ENCODE measurements at regions of chr2 and their contacts with region 1.

Region 1: GRCh38 chr2:39728941-39729351 is 50.1 kb downstream of the THUMPD2 start:
- DNase-seq: peak; percentile 60
- H3K4me3 Mint-ChIP-seq: no peak overlapping the region
- H3K27ac Mint-ChIP-seq: no peak overlapping the region
- H3K4me1 Mint-ChIP-seq: no peaks in the 10 kb centered on the region
- H3K27me3 Mint-ChIP-seq: peaks cover 13% of the 10 kb centered on the region
- CTCF ChIP-seq: peak; percentile 83

Region 2: DNA sequence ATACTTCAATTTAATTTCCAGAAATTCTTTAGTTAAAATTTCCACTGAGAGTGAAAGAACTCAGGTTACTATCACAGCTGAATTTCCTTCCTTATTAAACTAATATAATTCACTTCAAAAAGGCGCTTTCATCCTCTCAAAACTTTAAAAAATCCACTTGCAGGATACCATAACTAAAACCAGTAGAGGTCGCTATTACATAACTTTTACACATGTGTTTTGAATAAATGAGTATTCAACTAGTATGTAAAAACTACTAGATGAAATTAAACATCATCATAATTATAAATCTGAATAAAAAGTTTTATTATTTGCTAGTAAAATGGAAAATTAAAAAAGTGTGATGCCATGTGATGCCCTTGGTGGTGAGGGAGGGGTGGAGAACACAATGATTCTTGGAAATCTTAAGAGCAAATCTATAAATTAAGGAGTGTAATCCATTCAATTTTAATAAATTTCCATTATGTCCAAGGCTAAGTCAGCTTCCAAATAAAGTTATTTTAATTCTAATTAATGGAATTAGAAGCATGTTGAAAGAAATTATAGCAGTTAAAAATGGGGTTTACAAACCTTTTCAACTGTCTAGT is 669.5 kb before region 1 on chr2:
- CTCF ChIA-PET with region 1: no interaction called
- intact Hi-C with region 1: loop called (anchors 5 kb)
- DNase-seq: no peak
- H3K4me3 Mint-ChIP-seq: no peak overlapping the region
- H3K27ac Mint-ChIP-seq: no peak overlapping the region
- H3K4me1 Mint-ChIP-seq: no peaks in the 10 kb centered on the region
- H3K27me3 Mint-ChIP-seq: no peaks in the 10 kb centered on the region
- CTCF ChIP-seq: peak; percentile 43

Region 3: DNA sequence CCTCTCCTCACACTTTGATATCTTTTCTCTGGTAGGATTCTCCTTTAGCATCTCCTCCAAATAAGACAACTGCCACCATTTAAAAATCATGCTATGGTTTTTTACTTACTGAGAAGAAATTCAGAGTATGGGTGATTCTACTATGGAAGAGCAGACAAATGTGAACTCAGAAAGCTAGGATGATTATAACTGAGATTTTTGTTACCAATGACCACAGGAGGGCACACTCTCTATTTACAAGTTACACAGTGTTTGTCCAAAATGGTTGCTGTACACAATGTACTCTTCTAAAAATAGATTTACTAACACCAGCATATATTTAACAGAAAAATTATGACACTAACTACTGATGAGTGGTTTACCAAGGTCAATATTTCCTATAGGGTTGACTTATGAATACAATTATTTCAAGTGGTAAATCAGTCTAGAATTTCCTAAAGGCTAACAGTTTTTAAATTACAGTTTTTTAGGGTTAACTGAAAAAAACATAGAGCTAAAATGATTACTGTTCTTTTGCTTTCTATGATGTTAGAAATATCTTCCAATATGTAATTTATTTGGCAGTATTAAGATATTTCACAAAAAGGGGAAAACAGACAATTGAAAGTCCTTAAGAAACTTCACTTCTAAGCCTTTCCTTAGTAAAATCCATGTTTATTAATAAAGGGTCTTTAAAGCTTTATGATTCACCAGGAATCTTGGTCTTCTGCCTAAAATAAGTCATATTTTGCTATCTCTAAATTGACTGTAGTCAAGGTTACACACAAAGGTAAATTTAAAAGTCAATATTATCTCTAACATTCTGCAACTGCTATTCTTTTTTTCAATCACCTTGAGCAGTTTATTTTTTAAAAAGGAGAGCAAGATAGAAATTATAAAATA is 349.1 kb before region 1 on chr2:
- CTCF ChIA-PET with region 1: interaction called, 4 read pairs
- intact Hi-C with region 1: loop called (anchors 1 kb)
- DNase-seq: peak; percentile 17
- H3K4me3 Mint-ChIP-seq: no peak overlapping the region
- H3K27ac Mint-ChIP-seq: no peak overlapping the region
- H3K4me1 Mint-ChIP-seq: peaks cover 14% of the 10 kb centered on the region
- H3K27me3 Mint-ChIP-seq: no peaks in the 10 kb centered on the region
- CTCF ChIP-seq: no peak

Region 4: DNA sequence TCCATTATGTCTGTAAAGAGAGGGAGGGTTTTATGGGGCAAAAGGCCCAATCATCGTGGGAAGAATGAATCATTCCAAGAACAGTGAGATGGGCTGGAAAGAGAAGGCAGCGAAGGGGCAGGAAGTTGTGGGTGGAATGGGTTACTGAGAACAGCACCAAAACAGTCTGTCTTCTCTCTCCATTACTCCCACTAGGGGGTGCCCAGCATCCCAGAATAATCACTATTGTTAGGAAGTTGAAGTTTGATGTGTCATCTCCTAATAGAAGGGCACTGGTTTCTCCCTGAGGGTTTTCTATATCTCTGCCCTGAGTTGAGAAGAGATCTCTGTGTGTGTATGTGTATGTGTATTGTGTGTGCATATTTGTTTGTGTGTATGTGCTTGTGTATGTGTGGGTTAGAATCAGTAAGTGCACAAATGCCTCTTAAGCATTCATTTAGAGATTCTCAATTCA is 215.3 kb before region 1 on chr2:
- CTCF ChIA-PET with region 1: no interaction called
- intact Hi-C with region 1: loop called (anchors 2 kb)
- DNase-seq: peak; percentile 69
- H3K4me3 Mint-ChIP-seq: no peak overlapping the region
- H3K27ac Mint-ChIP-seq: peak overlapping the region; percentile 15
- H3K4me1 Mint-ChIP-seq: peaks cover 39% of the 10 kb centered on the region
- H3K27me3 Mint-ChIP-seq: no peaks in the 10 kb centered on the region
- CTCF ChIP-seq: peak; percentile 68

Region 5: GRCh38 chr2:39593439-39594393 is 135.2 kb before region 1 on chr2:
- CTCF ChIA-PET with region 1: interaction called, 20 read pairs
- intact Hi-C with region 1: loop called (anchors 5 kb)
- DNase-seq: peak; percentile 53
- H3K4me3 Mint-ChIP-seq: no peak overlapping the region
- H3K27ac Mint-ChIP-seq: no peak overlapping the region
- H3K4me1 Mint-ChIP-seq: no peaks in the 10 kb centered on the region
- H3K27me3 Mint-ChIP-seq: no peaks in the 10 kb centered on the region
- CTCF ChIP-seq: peak; percentile 46

Measured in Calu3 (cell line).